Dorsolateral prefrontal cortex (tissue), 120 donors: ENCODE measurements at regions of chr3 and their contacts with region 1.

Region 1: DNA sequence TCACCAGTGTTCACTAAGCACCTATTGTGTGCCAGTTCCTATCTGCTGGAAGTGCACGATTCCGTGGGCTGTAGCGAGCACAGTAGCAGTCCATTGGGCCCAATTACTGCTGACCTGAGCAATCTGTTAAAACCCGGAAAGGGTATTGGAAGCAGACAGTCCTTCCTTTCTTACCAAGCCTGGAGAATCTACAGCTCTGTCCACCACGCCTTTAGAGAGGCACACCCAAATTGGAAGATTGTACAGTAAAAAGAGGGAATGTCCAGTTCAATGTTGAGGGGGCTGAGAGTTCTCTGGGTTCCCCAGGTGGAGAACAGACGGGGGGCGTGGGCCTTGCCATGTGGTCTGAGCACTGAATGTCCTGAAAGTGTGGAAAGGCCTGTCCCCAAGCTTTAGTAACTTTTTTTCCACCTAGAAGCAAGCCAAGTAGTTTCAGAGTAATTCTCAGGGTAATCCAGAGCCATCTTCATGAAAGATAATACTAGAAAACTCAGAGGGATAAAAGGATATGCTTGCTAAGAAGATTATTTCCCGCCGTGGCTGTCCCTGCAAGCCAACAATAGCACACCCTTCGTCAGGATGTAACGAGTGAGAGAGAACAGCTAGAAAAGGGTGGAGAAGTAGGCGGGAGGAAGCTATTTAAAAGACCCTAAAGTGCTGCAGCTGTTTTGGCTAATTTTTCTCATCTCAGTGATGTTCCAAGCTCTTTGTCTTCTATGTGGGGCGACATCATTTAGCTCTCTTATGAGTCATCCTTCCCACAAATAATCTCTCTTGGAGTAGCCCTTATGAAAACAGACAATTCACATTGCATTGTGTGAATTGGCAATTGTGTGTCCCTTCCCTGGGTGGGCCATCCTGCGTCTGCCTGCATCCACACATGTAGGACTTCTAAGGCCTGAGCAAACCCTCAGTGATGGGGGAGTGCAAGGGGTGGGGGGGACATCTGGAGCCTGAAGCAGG is 181.0 kb downstream of the ATG7 start:
- DNase-seq: peak in 7 of 10 donors; percentile 20 to 52 (median 38)
- H3K4me3 ChIP-seq: peak overlapping the region in 11 of 59 donors; percentile 5 to 30 (median 15)
- H3K27ac ChIP-seq: peak overlapping the region in 58 of 59 donors; percentile 1 to 88 (median 71)
- H3K27me3 ChIP-seq: no peaks in the 10 kb centered on the region
- CTCF ChIP-seq: peak in 3 of 56 donors; percentile 7 to 9 (median 8)

Region 2: GRCh38 chr3:11250902-11251813 is 202.0 kb before region 1 on chr3:
- intact Hi-C with region 1: no loop called
- DNase-seq: no peak
- H3K4me3 ChIP-seq: no peak overlapping the region
- H3K27ac ChIP-seq: no peak overlapping the region
- H3K27me3 ChIP-seq: no peaks in the 10 kb centered on the region
- CTCF ChIP-seq: no peak

Region 3: DNA sequence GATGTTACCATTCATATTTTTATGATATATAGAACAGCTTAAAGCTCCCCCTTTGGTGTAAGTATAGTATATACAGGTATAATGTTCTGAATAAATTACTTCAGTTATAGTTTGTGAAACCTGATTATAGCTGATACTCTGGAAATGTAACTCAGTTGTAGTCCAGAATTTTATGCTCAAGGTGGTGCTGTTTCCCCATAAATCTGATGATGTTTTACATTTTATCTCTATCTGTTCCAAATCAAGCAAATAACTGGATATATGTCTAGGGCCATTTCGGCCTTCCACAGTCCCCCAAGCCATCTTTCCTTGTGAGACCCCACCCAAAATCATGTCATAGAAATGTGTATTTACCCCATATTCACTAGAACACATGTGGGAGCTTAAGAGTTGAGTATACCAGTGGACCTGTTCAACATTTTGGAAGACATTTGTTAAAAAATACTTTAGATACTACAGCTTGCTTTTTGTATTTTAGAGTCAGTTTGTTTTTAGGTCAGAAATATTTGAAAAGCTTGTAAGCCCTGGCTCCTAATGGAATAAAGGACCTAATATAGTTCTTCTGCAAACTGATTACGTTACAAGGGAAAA is 73.8 kb before region 1 on chr3:
- intact Hi-C with region 1: loop called in 1 of 2 experiments (anchors 5 kb)
- DNase-seq: no peak
- H3K4me3 ChIP-seq: peak overlapping the region in 46 of 59 donors; percentile 1 to 57 (median 27)
- H3K27ac ChIP-seq: peak overlapping the region in 48 of 59 donors; percentile 7 to 79 (median 60)
- H3K27me3 ChIP-seq: no peaks in the 10 kb centered on the region
- CTCF ChIP-seq: peak; percentile 38 to 89 (median 78)

Region 4: GRCh38 chr3:11434017-11434526 is 19.1 kb before region 1 on chr3:
- intact Hi-C with region 1: loop called in 1 of 2 experiments (anchors 2 kb)
- DNase-seq: peak in 6 of 10 donors; percentile 16 to 45 (median 32)
- H3K4me3 ChIP-seq: peak overlapping the region in 34 of 59 donors; percentile 1 to 46 (median 24)
- H3K27ac ChIP-seq: peak overlapping the region; percentile 4 to 94 (median 83)
- H3K27me3 ChIP-seq: no peaks in the 10 kb centered on the region
- CTCF ChIP-seq: peak in 1 of 56 donors; percentile 6

Region 5: DNA sequence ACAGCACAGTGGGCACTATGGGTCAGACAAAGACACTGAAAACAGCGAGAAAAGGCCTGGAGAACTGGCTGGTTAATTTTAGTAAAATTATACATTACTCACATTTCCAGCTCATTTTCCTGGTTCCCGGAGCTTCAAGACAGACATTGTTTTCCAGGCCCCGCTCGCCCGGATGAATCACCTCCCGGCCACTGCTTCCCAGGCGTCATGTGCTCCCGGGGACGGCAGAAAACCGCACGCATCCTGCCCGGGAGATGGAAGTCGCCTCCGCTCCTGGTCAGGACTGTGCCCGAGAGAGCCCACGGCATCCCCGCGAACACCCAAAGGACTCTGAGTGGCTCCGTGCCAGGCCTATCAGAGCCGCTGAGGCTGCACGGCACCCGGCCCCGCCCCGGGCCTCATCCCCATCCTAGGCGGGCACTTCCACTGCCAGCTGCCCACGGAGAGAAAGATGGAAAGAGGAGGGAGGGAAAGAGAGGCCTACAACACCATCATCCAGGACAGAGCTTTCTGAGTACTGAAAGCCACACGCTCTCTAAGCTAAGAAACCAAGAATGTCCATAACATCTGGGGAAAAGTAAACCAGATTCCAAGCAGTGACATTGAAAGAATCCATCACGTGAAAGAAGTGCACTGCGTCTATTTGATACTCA is 115.5 kb after region 1 on chr3:
- intact Hi-C with region 1: loop called in 1 of 2 experiments (anchors 10 kb)
- DNase-seq: peak; percentile 57 to 94 (median 82)
- H3K4me3 ChIP-seq: peak overlapping the region in 58 of 59 donors; percentile 20 to 66 (median 51)
- H3K27ac ChIP-seq: peak overlapping the region; percentile 65 to 98 (median 93)
- H3K27me3 ChIP-seq: no peaks in the 10 kb centered on the region
- CTCF ChIP-seq: peak in 3 of 56 donors; percentile 11 to 18 (median 11)

Region 6: GRCh38 chr3:11634081-11634635 is 181.0 kb after region 1 on chr3:
- intact Hi-C with region 1: no loop called
- DNase-seq: no peak
- H3K4me3 ChIP-seq: no peak overlapping the region
- H3K27ac ChIP-seq: peak overlapping the region in 9 of 59 donors; percentile 8 to 57 (median 41)
- H3K27me3 ChIP-seq: no peaks in the 10 kb centered on the region
- CTCF ChIP-seq: no peak